Calu3 (cell line): ENCODE measurements at regions of chr5 and their contacts with region 1.

Region 1: DNA sequence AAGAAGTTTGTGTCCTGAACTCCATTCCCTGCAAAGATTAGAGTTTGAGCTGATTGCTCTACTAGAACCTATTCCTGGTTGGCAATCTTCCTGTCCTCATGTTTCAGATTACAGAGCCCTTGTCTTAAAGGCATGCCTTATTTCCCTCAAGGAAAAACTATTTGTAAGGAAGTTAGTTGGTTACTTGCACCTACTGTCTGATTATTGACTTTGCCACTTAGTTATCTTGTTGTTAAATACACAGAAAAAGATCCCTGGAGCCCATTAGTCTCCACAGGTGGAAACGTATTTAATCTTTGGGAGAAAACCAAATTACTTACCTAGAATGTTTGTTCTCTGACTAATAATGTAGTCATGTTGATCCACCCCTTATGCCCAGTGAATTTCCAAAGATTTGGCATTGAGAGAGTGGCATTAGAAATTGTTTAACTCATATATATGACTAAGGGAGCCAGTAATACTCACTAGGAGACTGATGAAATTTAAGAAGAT is 132.3 kb upstream of the ELL2 start:
- DNase-seq: peak; percentile 41
- H3K4me3 Mint-ChIP-seq: peak overlapping the region; percentile 0
- H3K27ac Mint-ChIP-seq: peak overlapping the region; percentile 68
- H3K4me1 Mint-ChIP-seq: peaks cover 46% of the 10 kb centered on the region
- H3K27me3 Mint-ChIP-seq: no peaks in the 10 kb centered on the region
- CTCF ChIP-seq: no peak

Region 2: DNA sequence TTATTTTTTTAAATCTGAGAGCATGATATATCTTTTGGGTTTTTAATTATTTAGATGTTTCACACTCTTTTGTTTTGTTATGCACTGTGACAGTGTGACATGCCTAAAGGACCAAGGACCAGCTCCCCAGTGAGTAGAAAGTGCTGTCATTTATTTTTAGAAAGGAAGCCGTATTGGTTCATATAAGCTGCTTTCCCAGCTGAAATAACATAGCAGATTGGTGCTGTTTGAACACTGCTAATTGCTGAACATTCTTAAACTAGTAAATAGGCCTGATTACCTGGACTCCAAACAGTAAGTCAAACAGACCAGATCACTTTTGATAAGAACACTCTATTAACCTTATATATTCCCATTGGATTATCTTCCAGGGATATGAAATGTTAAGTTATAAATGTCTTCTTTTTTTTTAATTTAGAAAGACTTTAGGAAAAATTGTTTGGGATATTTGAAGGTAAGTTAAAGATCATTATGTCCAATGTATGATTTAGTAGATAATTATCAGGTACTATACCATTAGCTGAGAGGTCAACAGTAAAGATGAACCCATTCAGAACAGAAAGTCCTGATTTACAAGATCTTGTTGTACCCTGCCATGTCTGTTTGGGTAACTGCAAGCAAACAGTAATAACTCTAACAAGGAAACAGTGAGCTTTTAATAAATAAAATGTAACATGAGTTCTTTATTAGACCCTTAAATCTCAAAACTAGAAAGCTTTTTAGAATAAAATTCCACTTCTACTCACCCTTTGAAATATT is 104.5 kb before region 1 on chr5:
- CTCF ChIA-PET with region 1: no interaction called
- intact Hi-C with region 1: no loop called
- DNase-seq: no peak
- H3K4me3 Mint-ChIP-seq: no peak overlapping the region
- H3K27ac Mint-ChIP-seq: no peak overlapping the region
- H3K4me1 Mint-ChIP-seq: peaks cover 9% of the 10 kb centered on the region
- H3K27me3 Mint-ChIP-seq: no peaks in the 10 kb centered on the region
- CTCF ChIP-seq: no peak

Region 3: GRCh38 chr5:96026406-96027041 is 67.4 kb before region 1 on chr5:
- CTCF ChIA-PET with region 1: no interaction called
- intact Hi-C with region 1: loop called (anchors 5 kb)
- DNase-seq: peak; percentile 31
- H3K4me3 Mint-ChIP-seq: no peak overlapping the region
- H3K27ac Mint-ChIP-seq: peak overlapping the region; percentile 89
- H3K4me1 Mint-ChIP-seq: peaks cover 42% of the 10 kb centered on the region
- H3K27me3 Mint-ChIP-seq: no peaks in the 10 kb centered on the region
- CTCF ChIP-seq: no peak

Region 4: GRCh38 chr5:96146675-96147074 is 52.7 kb after region 1 on chr5:
- CTCF ChIA-PET with region 1: no interaction called
- intact Hi-C with region 1: no loop called
- DNase-seq: no peak
- H3K4me3 Mint-ChIP-seq: no peak overlapping the region
- H3K27ac Mint-ChIP-seq: no peak overlapping the region
- H3K4me1 Mint-ChIP-seq: peaks cover 19% of the 10 kb centered on the region
- H3K27me3 Mint-ChIP-seq: no peaks in the 10 kb centered on the region
- CTCF ChIP-seq: no peak

Region 5: GRCh38 chr5:96226941-96227552 is 133.1 kb after region 1 on chr5:
- CTCF ChIA-PET with region 1: no interaction called
- intact Hi-C with region 1: loop called (anchors 1 kb)
- DNase-seq: peak; percentile 14
- H3K4me3 Mint-ChIP-seq: peak overlapping the region; percentile 32
- H3K27ac Mint-ChIP-seq: peak overlapping the region; percentile 77
- H3K4me1 Mint-ChIP-seq: peaks cover 35% of the 10 kb centered on the region
- H3K27me3 Mint-ChIP-seq: no peaks in the 10 kb centered on the region
- CTCF ChIP-seq: no peak

Region 6: DNA sequence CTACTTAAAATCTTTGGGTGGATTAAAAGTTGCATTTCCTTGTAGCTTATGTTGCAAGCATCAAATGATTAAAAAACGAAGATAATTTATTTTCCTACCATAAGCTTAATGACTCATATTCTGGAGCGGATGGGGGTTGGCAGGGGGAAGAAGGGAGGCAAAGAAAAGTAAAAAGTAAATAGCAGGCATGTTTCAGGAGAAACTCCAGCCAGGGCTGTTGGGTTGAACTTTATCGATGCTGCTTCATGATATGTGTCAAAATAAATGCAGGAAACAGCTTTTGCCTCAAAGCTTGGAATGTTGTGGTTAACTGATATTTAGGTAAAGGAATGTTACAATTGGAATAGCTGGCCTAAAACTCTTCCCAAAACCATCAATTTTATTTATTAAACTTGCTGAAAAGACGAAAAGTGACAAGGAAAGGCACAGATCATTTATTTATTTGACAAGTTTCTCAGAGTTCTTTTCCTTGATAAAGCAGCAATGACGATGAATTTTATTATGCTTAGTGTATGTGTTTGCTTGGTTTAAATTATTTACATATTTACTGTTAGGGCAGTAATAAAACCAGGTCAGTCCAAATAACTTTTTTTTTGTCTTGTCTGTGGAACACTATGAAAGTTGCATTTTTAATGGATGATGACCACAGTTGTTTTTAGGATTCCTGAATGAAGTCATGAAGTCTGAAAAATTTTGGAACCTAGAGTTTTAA is 161.2 kb after region 1 on chr5:
- CTCF ChIA-PET with region 1: no interaction called
- intact Hi-C with region 1: loop called (anchors 1 kb)
- DNase-seq: peak; percentile 67
- H3K4me3 Mint-ChIP-seq: no peak overlapping the region
- H3K27ac Mint-ChIP-seq: peak overlapping the region; percentile 65
- H3K4me1 Mint-ChIP-seq: peaks cover 47% of the 10 kb centered on the region
- H3K27me3 Mint-ChIP-seq: no peaks in the 10 kb centered on the region
- CTCF ChIP-seq: no peak

Region 7: DNA sequence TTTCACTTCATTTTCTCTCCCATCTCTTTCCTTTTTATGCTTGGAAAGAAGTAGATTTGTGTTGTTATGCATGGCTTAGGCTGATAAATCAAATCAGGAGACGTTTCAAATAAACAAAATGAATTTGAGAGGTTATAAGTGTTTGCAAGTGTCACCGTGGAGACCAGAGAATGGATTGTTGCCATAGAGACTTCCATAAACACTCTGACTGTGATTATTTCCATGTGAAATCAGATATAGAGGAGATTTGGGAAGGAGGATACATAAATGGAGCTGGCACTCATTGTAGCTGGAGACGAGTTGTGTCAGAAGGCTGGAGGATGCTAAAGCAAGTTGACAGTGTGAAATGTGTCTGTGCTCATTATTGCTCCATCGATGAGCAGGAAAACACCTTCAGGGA is 423.4 kb after region 1 on chr5:
- CTCF ChIA-PET with region 1: no interaction called
- intact Hi-C with region 1: no loop called
- DNase-seq: no peak
- H3K4me3 Mint-ChIP-seq: no peak overlapping the region
- H3K27ac Mint-ChIP-seq: no peak overlapping the region
- H3K4me1 Mint-ChIP-seq: no peaks in the 10 kb centered on the region
- H3K27me3 Mint-ChIP-seq: peaks cover 48% of the 10 kb centered on the region
- CTCF ChIP-seq: no peak